K562 (cell line): ENCODE measurements at regions of chr15 and their contacts with region 1.

Region 1: DNA sequence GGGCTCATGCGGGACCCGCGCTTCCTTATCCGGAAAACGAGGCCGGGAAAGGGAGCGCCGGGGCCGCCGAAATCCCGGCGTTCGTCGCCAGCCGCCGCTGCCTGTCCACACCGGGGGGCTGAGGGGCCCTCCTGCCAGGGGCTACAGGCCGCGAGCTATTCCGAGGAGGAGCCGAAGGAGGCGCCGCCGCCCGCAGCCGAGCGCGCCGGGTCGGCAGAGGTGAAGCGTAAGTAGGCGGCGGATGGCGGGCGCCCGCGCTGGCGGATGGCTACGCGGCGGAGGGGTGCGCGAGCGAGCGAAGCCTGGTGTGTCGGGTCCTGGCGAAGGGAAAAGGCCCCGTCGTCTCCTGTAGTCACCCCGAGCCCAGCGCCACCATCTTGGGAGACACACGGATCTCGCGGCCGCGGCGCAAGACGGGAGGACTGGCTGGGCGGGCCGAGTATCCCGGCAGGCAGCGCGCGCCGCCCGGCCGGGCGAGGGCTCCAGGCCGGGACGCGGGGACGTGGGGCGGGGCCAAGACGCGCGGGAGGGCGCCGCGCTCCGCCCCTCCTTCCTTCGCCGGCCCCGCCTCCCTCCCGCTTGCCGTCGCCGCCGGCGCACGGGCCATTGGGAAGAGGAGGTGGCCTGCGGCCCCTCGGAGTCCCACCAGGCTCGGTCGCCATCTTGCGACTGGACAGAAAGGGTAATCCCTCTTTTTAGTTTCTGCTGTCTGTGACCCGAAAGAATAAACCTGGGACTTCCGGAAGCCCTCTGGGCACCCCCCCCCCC is at the start of gene UBE3A:
- DNase-seq: peak; percentile 89 to 93 (median 90)
- ATAC-seq: peak; percentile 95
- H3K4me3 ChIP-seq: peak within 1 kb of the TSS; percentile 95
- H3K27ac ChIP-seq: peak within 1 kb of the TSS; percentile 98
- H3K4me1 ChIP-seq: peaks cover 4 to 5% of the 10 kb centered on the region in 2 experiments; a peak in 2 of 5 replicates
- H3K27me3 ChIP-seq: no peaks in the 10 kb centered on the region
- CTCF ChIP-seq: peak in 2 of 3 experiments; percentile 3 to 27; a peak in 1 of 6 replicates
- EP300 ChIP-seq: no peak
- POLR2A ChIP-seq: peak; percentile 90
- RAD21 ChIP-seq: peak in 1 of 2 experiments; percentile 43; a peak in 2 of 4 replicates
- polyA plus RNA-seq, gene UBE3A: 29.3 to 30.5 TPM

Region 2: GRCh38 chr15:25345943-25346342 is 92.8 kb before region 1 on chr15:
- CTCF ChIA-PET with region 1: no interaction called
- POLR2A ChIA-PET with region 1: no interaction called
- in situ Hi-C with region 1: no loop called
- intact Hi-C with region 1: loop called (anchors 5 kb)
- DNase-seq: no peak
- ATAC-seq: peak; percentile 74
- H3K4me3 ChIP-seq: no peak overlapping the region
- H3K27ac ChIP-seq: no peak overlapping the region
- H3K4me1 ChIP-seq: no peaks in the 10 kb centered on the region
- H3K27me3 ChIP-seq: no peaks in the 10 kb centered on the region
- CTCF ChIP-seq: peak in 2 of 3 experiments; percentile 7 to 9; a peak in 1 of 6 replicates
- EP300 ChIP-seq: no peak
- POLR2A ChIP-seq: no peak
- RAD21 ChIP-seq: no peak

Region 3: GRCh38 chr15:25362545-25362944 is 76.2 kb before region 1 on chr15:
- CTCF ChIA-PET with region 1: no interaction called
- POLR2A ChIA-PET with region 1: no interaction called
- in situ Hi-C with region 1: no loop called
- intact Hi-C with region 1: loop called (anchors 5 kb)
- DNase-seq: no peak
- ATAC-seq: no peak
- H3K4me3 ChIP-seq: no peak overlapping the region
- H3K27ac ChIP-seq: no peak overlapping the region
- H3K4me1 ChIP-seq: no peaks in the 10 kb centered on the region; a peak in 1 of 5 replicates
- H3K27me3 ChIP-seq: no peaks in the 10 kb centered on the region
- CTCF ChIP-seq: no peak
- EP300 ChIP-seq: no peak
- POLR2A ChIP-seq: no peak
- RAD21 ChIP-seq: no peak

Region 4: GRCh38 chr15:25378501-25378901 is 60.3 kb before region 1 on chr15:
- CTCF ChIA-PET with region 1: no interaction called
- POLR2A ChIA-PET with region 1: no interaction called
- in situ Hi-C with region 1: no loop called
- intact Hi-C with region 1: no loop called
- DNase-seq: peak in 1 of 4 experiments; percentile 6
- ATAC-seq: no peak; the same call in 2 of the 3 replicates
- H3K4me3 ChIP-seq: no peak overlapping the region
- H3K27ac ChIP-seq: no peak overlapping the region
- H3K4me1 ChIP-seq: no peaks in the 10 kb centered on the region; a peak in 1 of 5 replicates
- H3K27me3 ChIP-seq: no peaks in the 10 kb centered on the region
- CTCF ChIP-seq: no peak
- EP300 ChIP-seq: no peak
- POLR2A ChIP-seq: no peak
- RAD21 ChIP-seq: no peak

Region 5: GRCh38 chr15:25397100-25397499 is 41.7 kb before region 1 on chr15:
- CTCF ChIA-PET with region 1: no interaction called
- POLR2A ChIA-PET with region 1: no interaction called
- in situ Hi-C with region 1: no loop called
- intact Hi-C with region 1: loop called (anchors 5 kb)
- DNase-seq: no peak
- ATAC-seq: no peak
- H3K4me3 ChIP-seq: no peak overlapping the region
- H3K27ac ChIP-seq: no peak overlapping the region
- H3K4me1 ChIP-seq: no peaks in the 10 kb centered on the region; a peak in 1 of 5 replicates
- H3K27me3 ChIP-seq: no peaks in the 10 kb centered on the region
- CTCF ChIP-seq: no peak
- EP300 ChIP-seq: no peak
- POLR2A ChIP-seq: no peak
- RAD21 ChIP-seq: no peak

Region 6: DNA sequence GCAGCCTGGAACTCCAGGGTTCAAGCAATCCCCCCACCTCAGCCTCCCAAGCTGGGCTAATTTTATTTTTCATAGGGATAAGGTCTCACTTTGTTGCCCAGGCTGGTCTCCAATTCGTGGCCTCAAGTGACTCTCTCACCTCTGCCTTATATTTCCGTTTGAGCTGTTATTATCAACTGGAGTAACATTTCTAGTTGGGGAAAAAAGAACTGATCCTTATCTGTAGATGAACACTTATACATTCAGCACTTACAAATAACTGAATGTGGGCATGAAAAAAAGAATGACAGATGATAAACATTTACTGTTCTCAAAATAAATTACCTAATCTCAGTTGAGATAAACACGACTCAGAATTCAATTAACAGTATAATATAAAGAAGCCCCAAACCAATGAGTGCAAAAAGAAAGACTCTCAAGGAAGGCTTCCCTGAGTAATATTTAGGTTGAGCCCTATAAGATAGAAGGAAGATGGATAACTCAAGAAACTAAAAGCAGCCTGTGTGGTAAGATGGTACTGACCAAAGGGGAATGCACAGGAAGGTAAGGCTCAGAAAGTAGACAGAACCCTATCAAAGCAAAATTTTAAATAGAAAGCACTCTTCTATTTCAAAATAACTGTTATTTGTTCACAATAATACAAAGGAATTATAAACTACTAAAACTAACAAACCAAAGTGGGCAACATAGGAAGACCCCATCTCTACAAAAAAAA is 11.7 kb before region 1 on chr15:
- CTCF ChIA-PET with region 1: no interaction called
- POLR2A ChIA-PET with region 1: interaction called, 12 read pairs
- in situ Hi-C with region 1: no loop called
- intact Hi-C with region 1: no loop called
- DNase-seq: peak in 1 of 4 experiments; percentile 42
- ATAC-seq: peak; percentile 67
- H3K4me3 ChIP-seq: no peak overlapping the region
- H3K27ac ChIP-seq: peak overlapping the region; percentile 52; the same call in 2 of the 3 replicates
- H3K4me1 ChIP-seq: peaks cover 3 to 8% of the 10 kb centered on the region in 2 experiments; a peak in 4 of 5 replicates
- H3K27me3 ChIP-seq: no peaks in the 10 kb centered on the region
- CTCF ChIP-seq: no peak
- EP300 ChIP-seq: no peak
- POLR2A ChIP-seq: no peak
- RAD21 ChIP-seq: no peak

Region 7: GRCh38 chr15:25481207-25481859 is 42.5 kb after region 1 on chr15:
- CTCF ChIA-PET with region 1: no interaction called
- POLR2A ChIA-PET with region 1: no interaction called
- in situ Hi-C with region 1: no loop called
- intact Hi-C with region 1: no loop called
- DNase-seq: no peak
- ATAC-seq: no peak
- H3K4me3 ChIP-seq: no peak overlapping the region
- H3K27ac ChIP-seq: no peak overlapping the region
- H3K4me1 ChIP-seq: no peaks in the 10 kb centered on the region
- H3K27me3 ChIP-seq: no peaks in the 10 kb centered on the region; a peak in 1 of 5 replicates
- CTCF ChIP-seq: no peak
- EP300 ChIP-seq: no peak
- POLR2A ChIP-seq: no peak
- RAD21 ChIP-seq: no peak